Activated T-helper 1 cell treated with anti-CD3 and anti-CD28 coated beads, Interleukin-12 subunit alpha, Interleukin-12 subunit beta, Interleukin-2, Interleukin-4 antibody, amounts not matched to agents 30 ng/mL and 10 ng/mL and 1 ng/mL, durations not matched to agents 14 hours and 24 hours and 36 hours (primary cell): ENCODE measurements at regions of chr16 and their contacts with region 1.

Region 1: DNA sequence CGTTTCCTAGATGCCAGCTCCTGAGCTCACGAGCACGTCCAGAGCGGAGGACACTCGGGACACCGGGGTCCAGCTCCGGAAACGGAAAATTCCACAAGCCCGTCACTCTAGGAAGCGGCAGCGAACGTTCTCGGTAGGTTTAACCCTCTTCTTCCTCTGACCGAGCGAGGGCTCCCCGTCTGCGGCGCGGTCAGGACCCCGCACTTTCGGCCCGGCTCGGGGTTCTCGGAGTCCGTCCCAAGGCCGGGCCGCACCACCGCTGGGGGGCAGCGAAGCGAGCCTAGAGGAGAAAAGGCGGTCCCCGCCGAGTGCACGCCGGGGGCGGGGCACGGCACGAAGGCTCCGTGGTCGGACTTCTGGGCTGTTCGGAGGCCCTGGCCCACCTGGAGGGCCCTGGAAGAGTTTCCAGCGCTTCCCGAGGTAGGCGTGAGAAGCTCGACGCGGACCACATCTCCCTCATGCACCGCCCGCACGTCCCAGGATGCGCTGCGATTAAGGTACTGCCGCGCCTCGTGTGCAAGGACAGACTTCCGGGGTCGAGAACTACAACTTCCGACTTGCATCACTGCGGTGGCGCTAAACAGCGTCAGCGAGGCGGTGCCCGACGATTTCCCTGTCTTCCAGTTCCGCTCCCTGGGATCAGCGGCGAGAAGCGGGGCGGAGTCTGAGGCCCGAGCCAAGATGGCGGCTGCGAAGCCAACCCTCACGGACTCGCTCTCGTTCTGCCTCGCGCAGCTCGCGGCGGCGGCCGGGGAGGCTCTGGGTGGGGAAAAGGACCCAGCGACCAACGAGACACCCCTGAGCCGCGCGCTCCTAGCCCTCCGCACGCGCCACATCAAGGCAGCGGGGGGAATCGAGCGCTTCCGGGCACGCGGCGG is at the start of gene ARMC5:
- DNase-seq: peak; percentile 95
- H3K4me3 Mint-ChIP-seq: peak within 1 kb of the TSS; percentile 93
- H3K27ac Mint-ChIP-seq: peak within 1 kb of the TSS; percentile 95
- H3K4me1 Mint-ChIP-seq: peaks cover 41% of the 10 kb centered on the region
- H3K27me3 Mint-ChIP-seq: no peaks in the 10 kb centered on the region
- total RNA-seq, gene ARMC5: 11.2 and 12.7 TPM in 2 replicates

Region 2: DNA sequence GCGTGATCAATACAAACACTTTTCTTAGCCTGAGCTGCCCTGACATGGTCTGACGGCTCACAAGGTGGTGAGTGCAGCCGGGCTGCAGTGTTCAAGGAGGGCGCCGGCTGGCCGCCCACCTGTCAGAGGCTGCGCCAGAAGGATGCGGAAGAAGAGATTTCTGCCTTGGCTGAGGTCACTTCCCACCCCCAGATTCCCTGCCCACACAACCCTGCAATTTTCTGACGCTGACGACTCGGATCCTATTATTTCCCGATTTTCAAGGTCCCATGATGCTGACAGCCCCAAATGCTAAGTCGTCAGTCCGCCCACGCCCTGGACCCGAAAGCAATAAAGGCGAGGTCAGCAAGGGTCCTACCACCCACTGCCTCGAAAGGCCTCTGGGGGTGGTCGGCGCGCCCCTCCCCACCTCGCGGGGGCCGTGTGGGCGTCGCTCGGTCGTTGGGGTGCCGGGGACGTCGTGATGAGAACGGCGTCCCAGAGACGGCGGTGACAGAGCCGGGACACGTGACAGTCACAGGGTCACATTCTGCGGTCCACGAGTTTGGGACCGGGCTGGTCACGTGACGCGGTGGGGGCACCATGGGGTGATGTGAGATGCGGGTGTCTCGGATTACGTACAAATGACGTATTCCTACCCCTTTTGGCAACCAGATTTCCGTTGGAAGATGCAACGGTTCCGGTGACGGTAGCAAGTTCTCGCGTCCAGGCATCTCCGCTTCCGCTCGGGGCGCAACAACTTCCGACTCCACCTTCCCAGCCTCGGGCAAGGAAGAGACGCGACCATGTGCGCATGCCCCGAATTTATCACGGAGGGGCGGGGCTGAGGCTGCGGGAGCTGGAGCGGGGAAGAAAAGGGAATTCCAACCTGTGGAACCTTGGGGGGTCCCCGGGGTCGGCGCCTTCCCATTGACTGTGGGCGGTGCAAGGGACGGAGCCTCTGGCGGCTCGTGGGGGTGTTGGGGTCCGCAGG is 426.1 kb before region 1 on chr16 and contains the start of gene STX4:
- intact Hi-C with region 1: loop called (anchors 1 kb)
- DNase-seq: peak; percentile 97
- H3K4me3 Mint-ChIP-seq: peak within 1 kb of the TSS; percentile 95
- H3K27ac Mint-ChIP-seq: peak within 1 kb of the TSS; percentile 92
- H3K4me1 Mint-ChIP-seq: peaks cover 24% of the 10 kb centered on the region
- H3K27me3 Mint-ChIP-seq: no peaks in the 10 kb centered on the region
- total RNA-seq, gene STX4: 56.4 and 58.7 TPM in 2 replicates

Region 3: DNA sequence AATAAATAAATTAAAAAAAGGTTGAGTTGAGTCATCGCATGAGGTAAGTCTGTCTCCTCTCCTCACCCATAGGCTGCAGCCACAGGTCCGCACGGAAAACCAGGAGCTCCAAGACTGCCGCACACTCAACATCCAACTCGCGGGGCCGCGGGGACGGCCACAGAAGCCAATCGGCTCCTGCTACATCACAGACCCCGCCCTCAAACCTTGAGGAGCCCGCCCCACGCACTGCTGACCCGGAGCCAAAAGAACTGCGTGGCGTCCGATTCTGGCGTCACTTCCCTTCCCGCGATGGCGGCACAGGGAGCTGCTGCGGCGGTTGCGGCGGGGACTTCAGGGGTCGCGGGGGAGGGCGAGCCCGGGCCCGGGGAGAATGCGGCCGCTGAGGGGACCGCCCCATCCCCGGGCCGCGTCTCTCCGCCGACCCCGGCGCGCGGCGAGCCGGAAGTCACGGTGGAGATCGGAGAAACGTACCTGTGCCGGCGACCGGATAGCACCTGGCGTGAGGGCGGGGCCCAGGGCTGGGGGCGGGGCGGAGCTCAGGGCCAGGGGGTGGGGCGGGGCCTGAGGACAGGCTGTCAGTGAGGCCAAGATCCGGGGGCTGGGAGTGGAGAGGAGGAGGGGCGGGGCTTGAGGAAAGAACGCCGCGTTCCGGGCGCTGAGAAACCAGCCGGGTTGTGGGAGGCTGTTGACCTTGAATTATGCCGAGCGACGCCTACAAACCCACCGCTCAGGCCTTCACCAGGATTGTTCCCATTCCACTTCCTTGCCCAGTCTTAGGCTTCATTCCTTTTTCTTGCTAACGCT is 341.5 kb before region 1 on chr16 and contains the start of gene KAT8:
- intact Hi-C with region 1: loop called (anchors 1 kb)
- DNase-seq: peak; percentile 95
- H3K4me3 Mint-ChIP-seq: peak within 1 kb of the TSS; percentile 88
- H3K27ac Mint-ChIP-seq: peak within 1 kb of the TSS; percentile 92
- H3K4me1 Mint-ChIP-seq: peaks cover 19% of the 10 kb centered on the region
- H3K27me3 Mint-ChIP-seq: no peaks in the 10 kb centered on the region
- total RNA-seq, gene KAT8: 55.4 and 58.2 TPM in 2 replicates

Region 4: DNA sequence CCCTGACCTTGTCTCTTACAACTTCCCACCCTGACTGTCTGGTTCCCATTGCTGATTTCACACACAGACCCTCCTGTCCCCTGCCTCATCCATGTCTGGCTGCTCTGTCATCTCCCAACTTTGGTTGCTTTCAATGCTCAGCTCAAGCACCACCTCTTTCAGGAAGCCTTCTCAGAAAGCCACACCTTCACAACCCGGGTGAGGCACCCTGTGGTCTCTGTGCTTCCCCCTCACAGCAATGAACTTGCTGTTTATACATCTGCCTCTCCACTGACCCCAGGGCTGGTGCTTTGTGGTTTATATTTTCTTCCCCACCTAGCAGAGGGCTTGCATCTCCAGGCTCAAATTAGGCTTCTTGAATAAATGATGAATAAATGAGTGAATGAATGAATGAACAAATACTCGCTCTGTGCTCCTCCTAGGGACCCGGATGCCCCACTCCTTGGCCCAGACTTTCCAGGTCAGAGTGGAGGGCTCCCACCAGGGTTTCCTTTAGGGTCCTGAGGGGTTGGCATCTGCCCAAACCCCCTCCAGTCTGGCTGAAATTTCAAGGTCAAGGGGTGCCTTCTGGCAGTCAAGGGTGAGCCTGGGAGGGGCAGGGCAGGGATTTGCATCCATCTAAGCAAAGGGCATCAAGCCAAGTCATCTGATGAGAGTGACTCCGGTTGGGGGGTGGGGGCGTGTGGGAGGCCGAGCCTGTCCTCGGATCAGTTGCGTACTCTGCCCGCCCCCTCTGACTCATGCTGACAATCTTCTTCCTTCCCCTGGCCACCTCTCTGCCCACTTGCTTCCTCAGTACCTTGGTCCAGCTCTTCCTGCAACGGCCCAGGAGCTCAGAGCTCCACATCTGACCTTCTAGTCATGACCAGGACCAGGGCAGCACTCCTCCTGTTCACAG is 104.4 kb before region 1 on chr16 and contains the start of gene ITGAX:
- intact Hi-C with region 1: loop called (anchors 1 kb)
- DNase-seq: peak; percentile 76
- H3K4me3 Mint-ChIP-seq: peak within 1 kb of the TSS; percentile 84
- H3K27ac Mint-ChIP-seq: peak within 1 kb of the TSS; percentile 99
- H3K4me1 Mint-ChIP-seq: peaks cover 69% of the 10 kb centered on the region
- H3K27me3 Mint-ChIP-seq: no peaks in the 10 kb centered on the region
- total RNA-seq, gene ITGAX: 63.8 and 65.0 TPM in 2 replicates

Region 5: DNA sequence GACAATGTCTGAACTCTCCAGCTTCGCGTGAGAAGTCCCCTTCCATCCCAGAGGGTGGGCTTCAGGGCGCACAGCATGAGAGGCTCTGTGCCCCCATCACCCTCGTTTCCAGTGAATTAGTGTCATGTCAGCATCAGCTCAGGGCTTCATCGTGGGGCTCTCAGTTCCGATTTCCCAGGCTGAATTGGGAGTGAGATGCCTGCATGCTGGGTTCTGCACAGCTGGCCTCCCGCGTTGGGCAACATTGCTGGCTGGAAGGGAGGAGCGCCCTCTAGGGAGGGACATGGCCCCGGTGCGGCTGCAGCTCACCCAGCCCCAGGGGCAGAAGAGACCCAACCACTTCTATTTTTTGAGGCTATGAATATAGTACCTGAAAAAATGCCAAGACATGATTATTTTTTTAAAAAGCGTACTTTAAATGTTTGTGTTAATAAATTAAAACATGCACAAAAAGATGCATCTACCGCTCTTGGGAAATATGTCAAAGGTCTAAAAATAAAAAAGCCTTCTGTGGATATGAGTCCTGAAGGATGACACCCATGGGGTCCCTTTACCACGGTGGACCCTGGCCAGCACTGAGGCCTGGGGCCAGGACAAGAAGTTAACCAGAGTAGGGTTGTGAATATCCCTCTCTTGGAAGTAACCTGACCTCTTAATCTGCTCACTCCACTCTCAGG is 76.5 kb before region 1 on chr16:
- intact Hi-C with region 1: no loop called
- DNase-seq: peak; percentile 60
- H3K4me3 Mint-ChIP-seq: no peak overlapping the region
- H3K27ac Mint-ChIP-seq: no peak overlapping the region
- H3K4me1 Mint-ChIP-seq: peaks cover 31% of the 10 kb centered on the region
- H3K27me3 Mint-ChIP-seq: peaks cover 3% of the 10 kb centered on the region

Region 6: GRCh38 chr16:31440516-31441184 is 18.4 kb before region 1 on chr16:
- intact Hi-C with region 1: loop called (anchors 1 kb)
- DNase-seq: no peak
- H3K4me3 Mint-ChIP-seq: no peak overlapping the region
- H3K27ac Mint-ChIP-seq: no peak overlapping the region
- H3K4me1 Mint-ChIP-seq: peaks cover 19% of the 10 kb centered on the region
- H3K27me3 Mint-ChIP-seq: peaks cover 9% of the 10 kb centered on the region

Region 7: GRCh38 chr16:31507929-31508705 is 49.0 kb after region 1 on chr16 and contains the start of gene RUSF1:
- intact Hi-C with region 1: loop called (anchors 1 kb)
- DNase-seq: peak; percentile 81
- H3K4me3 Mint-ChIP-seq: peak within 1 kb of the TSS; percentile 95
- H3K27ac Mint-ChIP-seq: peak within 1 kb of the TSS; percentile 93
- H3K4me1 Mint-ChIP-seq: peaks cover 49% of the 10 kb centered on the region
- H3K27me3 Mint-ChIP-seq: no peaks in the 10 kb centered on the region
- total RNA-seq, gene RUSF1: 36.3 and 42.2 TPM in 2 replicates

Region 8: DNA sequence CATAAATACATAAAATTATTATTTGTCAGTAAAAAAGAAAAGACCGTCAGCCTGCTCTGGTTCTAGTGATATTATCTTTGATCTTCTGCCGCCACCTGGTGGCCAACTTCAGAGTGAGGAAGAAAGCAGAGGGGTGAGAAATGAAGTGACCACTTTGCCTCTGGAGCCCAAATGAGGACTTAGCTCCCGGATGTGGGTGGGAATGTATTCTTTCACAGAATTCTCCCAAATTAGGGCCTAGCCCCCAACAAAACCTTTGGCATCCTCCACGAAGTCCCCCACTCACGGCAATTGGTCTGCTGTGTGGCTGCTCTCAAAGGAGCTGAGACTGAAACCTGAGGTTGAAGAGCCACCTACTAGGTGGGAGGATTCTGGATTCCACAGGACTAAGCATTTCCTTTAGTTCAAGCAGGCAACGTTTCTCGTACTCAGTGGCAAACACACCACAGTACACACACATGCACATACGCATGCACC is 409.6 kb after region 1 on chr16:
- intact Hi-C with region 1: loop called (anchors 1 kb)
- DNase-seq: peak; percentile 74
- H3K4me3 Mint-ChIP-seq: peak overlapping the region; percentile 72
- H3K27ac Mint-ChIP-seq: peak overlapping the region; percentile 93
- H3K4me1 Mint-ChIP-seq: peaks cover 77% of the 10 kb centered on the region
- H3K27me3 Mint-ChIP-seq: peaks cover 3% of the 10 kb centered on the region